K562 (cell line): ENCODE measurements at regions of chr5 and their contacts with region 1.

Region 1: GRCh38 chr5:126544087-126544740 is 50.8 kb downstream of the ALDH7A1 start:
- DNase-seq: peak; percentile 37 to 74 (median 48)
- ATAC-seq: peak; percentile 90
- H3K4me3 ChIP-seq: no peak overlapping the region
- H3K27ac ChIP-seq: no peak overlapping the region
- H3K4me1 ChIP-seq: no peaks in the 10 kb centered on the region
- H3K27me3 ChIP-seq: peaks cover 5 to 19% of the 10 kb centered on the region in 2 experiments; a peak in 4 of 5 replicates
- CTCF ChIP-seq: peak; percentile 65 to 76 (median 73)
- EP300 ChIP-seq: no peak
- POLR2A ChIP-seq: no peak
- RAD21 ChIP-seq: peak; percentile 55 to 72

Region 2: GRCh38 chr5:126354012-126354857 is 190.0 kb before region 1 on chr5:
- CTCF ChIA-PET with region 1: interaction called, 36 read pairs
- POLR2A ChIA-PET with region 1: interaction called, 5 read pairs
- in situ Hi-C with region 1: loop called (anchors 5 kb)
- intact Hi-C with region 1: loop called (anchors 1 kb)
- DNase-seq: peak in 2 of 4 experiments; percentile 52 to 58
- ATAC-seq: peak; percentile 86
- H3K4me3 ChIP-seq: no peak overlapping the region
- H3K27ac ChIP-seq: peak overlapping the region; percentile 55
- H3K4me1 ChIP-seq: peaks cover 0 to 10% of the 10 kb centered on the region in 2 experiments; a peak in 2 of 5 replicates
- H3K27me3 ChIP-seq: no peaks in the 10 kb centered on the region
- CTCF ChIP-seq: peak; percentile 50 to 81 (median 54); a peak in 4 of 6 replicates
- EP300 ChIP-seq: no peak
- POLR2A ChIP-seq: no peak
- RAD21 ChIP-seq: peak; percentile 94 to 97

Region 3: DNA sequence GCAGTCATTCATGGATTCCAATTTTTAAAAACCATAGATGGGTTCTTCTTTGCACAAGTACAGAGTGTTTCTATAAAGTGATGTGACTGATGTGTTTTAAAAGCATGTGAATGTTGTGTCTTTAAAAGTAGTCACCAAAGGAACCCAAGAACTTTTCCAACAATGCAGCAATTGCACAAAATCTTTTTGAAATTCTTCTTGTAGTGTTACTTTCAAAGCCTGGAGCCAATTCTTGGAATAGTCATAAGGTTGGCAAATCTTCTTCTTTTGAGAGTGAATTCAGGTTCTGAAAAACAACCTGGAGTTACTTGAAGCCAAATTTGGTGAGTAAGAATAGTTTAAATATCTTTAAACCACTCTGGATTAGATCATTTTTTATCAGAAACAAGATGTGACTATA is 110.5 kb before region 1 on chr5:
- CTCF ChIA-PET with region 1: no interaction called
- POLR2A ChIA-PET with region 1: no interaction called
- in situ Hi-C with region 1: no loop called
- intact Hi-C with region 1: no loop called
- DNase-seq: no peak
- ATAC-seq: no peak
- H3K4me3 ChIP-seq: no peak overlapping the region
- H3K27ac ChIP-seq: no peak overlapping the region
- H3K4me1 ChIP-seq: no peaks in the 10 kb centered on the region
- H3K27me3 ChIP-seq: no peaks in the 10 kb centered on the region
- CTCF ChIP-seq: no peak
- EP300 ChIP-seq: no peak
- POLR2A ChIP-seq: no peak
- RAD21 ChIP-seq: no peak

Region 4: DNA sequence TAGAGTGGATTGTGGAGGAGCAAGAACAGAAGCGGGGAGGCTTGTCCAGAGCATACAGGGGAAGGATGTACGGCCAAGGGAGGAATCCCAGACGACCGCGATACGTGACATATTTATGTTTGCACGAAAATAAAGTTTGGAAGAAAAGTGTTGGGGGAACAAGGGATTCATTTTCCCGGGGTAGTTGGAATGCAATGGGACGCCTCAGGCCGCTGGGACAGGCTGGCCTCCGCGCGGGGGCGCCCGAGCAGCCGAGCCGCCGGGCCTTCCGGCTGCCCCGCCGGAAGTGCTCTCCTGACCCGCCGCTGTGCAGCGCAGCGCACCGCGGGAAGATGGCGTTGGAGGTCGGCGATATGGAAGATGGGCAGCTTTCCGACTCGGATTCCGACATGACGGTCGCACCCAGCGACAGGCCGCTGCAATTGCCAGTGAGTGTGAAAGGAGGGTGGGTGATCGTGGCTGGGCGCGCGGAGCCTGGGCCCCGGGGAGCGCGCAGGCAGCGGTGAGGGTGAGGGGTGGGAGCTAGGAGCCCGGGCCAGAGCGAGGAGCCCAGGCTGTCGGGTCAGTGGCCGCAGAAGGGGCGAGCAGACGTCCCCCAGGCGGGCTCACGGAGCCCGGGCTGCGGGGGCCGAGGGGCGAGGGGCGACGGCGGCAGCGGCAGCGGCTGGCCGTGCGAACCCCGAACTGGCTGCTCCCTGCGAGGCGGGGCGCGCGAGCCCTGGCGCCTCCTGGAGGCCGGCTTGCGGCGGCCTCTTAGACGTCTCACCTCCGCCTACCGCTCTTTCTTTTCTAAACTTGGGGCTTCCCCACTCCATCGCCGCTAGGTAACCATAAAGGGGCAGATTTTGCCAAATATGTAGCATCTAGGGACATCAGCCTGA is 56.7 kb after region 1 on chr5 and contains the start of gene PHAX:
- CTCF ChIA-PET with region 1: no interaction called
- POLR2A ChIA-PET with region 1: no interaction called
- in situ Hi-C with region 1: no loop called
- intact Hi-C with region 1: loop called (anchors 1 kb)
- DNase-seq: peak; percentile 84 to 89 (median 86)
- ATAC-seq: peak; percentile 99
- H3K4me3 ChIP-seq: peak within 1 kb of the TSS; percentile 100
- H3K27ac ChIP-seq: peak within 1 kb of the TSS; percentile 87
- H3K4me1 ChIP-seq: peaks cover 5 to 27% of the 10 kb centered on the region in 2 experiments; a peak in 3 of 5 replicates
- H3K27me3 ChIP-seq: peaks cover 0 to 6% of the 10 kb centered on the region in 2 experiments; a peak in 1 of 5 replicates
- CTCF ChIP-seq: peak; percentile 87 to 92 (median 90)
- EP300 ChIP-seq: 0 out of 2 replicates have a peak, but pooled peaks have one; percentile 23
- POLR2A ChIP-seq: peak; percentile 90
- RAD21 ChIP-seq: peak; percentile 37 to 46; a peak in 3 of 4 replicates
- polyA plus RNA-seq, gene PHAX: 56.1 to 59.8 TPM

Region 5: GRCh38 chr5:126651013-126651577 is 106.9 kb after region 1 on chr5:
- CTCF ChIA-PET with region 1: no interaction called
- POLR2A ChIA-PET with region 1: no interaction called
- in situ Hi-C with region 1: no loop called
- intact Hi-C with region 1: loop called (anchors 5 kb)
- DNase-seq: no peak
- ATAC-seq: no peak
- H3K4me3 ChIP-seq: no peak overlapping the region
- H3K27ac ChIP-seq: no peak overlapping the region
- H3K4me1 ChIP-seq: no peaks in the 10 kb centered on the region
- H3K27me3 ChIP-seq: no peaks in the 10 kb centered on the region; a peak in 1 of 5 replicates
- CTCF ChIP-seq: no peak
- EP300 ChIP-seq: no peak
- POLR2A ChIP-seq: no peak
- RAD21 ChIP-seq: no peak

Region 6: GRCh38 chr5:127313847-127314473 is 769.7 kb after region 1 on chr5:
- CTCF ChIA-PET with region 1: no interaction called
- POLR2A ChIA-PET with region 1: no interaction called
- in situ Hi-C with region 1: loop called (anchors 5 kb)
- intact Hi-C with region 1: no loop called
- DNase-seq: peak; percentile 70 to 72 (median 71)
- ATAC-seq: peak; percentile 96
- H3K4me3 ChIP-seq: no peak overlapping the region
- H3K27ac ChIP-seq: no peak overlapping the region
- H3K4me1 ChIP-seq: no peaks in the 10 kb centered on the region
- H3K27me3 ChIP-seq: 0 out of 5 replicates have a peak, but pooled peaks cover 0 to 4% of the 10 kb centered on the region in 2 experiments
- CTCF ChIP-seq: peak; percentile 78 to 88 (median 79)
- EP300 ChIP-seq: no peak
- POLR2A ChIP-seq: no peak
- RAD21 ChIP-seq: peak; percentile 65 to 75

Region 7: GRCh38 chr5:127492854-127493738 is 948.9 kb after region 1 on chr5:
- CTCF ChIA-PET with region 1: interaction called, 8 read pairs
- POLR2A ChIA-PET with region 1: no interaction called
- in situ Hi-C with region 1: no loop called
- intact Hi-C with region 1: loop called (anchors 5 kb)
- DNase-seq: peak; percentile 38 to 45 (median 43)
- ATAC-seq: peak; percentile 78
- H3K4me3 ChIP-seq: no peak overlapping the region
- H3K27ac ChIP-seq: no peak overlapping the region
- H3K4me1 ChIP-seq: no peaks in the 10 kb centered on the region; a peak in 1 of 5 replicates
- H3K27me3 ChIP-seq: no peaks in the 10 kb centered on the region
- CTCF ChIP-seq: peak; percentile 79 to 89 (median 80)
- EP300 ChIP-seq: no peak
- POLR2A ChIP-seq: no peak
- RAD21 ChIP-seq: peak; percentile 65 to 67